ENCODE measurements at regions of chr5 and their contacts with region 1.

Region 1: GRCh38 chr5:45334939-45335338 is 361.2 kb downstream of the HCN1 start:
- DNase-seq: no peak
- ATAC-seq: peak; percentile 74 to 97 (median 93)
- H3K4me3 ChIP-seq: no peak overlapping the region
- H3K27ac ChIP-seq: peak overlapping the region in 9 of 10 donors; percentile 36 to 85 (median 68)
- H3K4me1 ChIP-seq: peaks cover 0 to 19% (median 0%) of the 10 kb centered on the region in 9 donors
- H3K27me3 ChIP-seq: no peaks in the 10 kb centered on the region
- CTCF ChIP-seq: no peak

Region 2: GRCh38 chr5:45274241-45274640 is 60.7 kb before region 1 on chr5:
- intact Hi-C with region 1: loop called in 1 of 10 experiments (anchors 10 kb)
- DNase-seq: no peak
- ATAC-seq: no peak
- H3K4me3 ChIP-seq: no peak overlapping the region
- H3K27ac ChIP-seq: no peak overlapping the region
- H3K4me1 ChIP-seq: no peaks in the 10 kb centered on the region
- H3K27me3 ChIP-seq: no peaks in the 10 kb centered on the region
- CTCF ChIP-seq: no peak

Measured in heart right ventricle (tissue), 16 donors.